ENCODE measurements at regions of chr22 and their contacts with region 1.

Region 1: DNA sequence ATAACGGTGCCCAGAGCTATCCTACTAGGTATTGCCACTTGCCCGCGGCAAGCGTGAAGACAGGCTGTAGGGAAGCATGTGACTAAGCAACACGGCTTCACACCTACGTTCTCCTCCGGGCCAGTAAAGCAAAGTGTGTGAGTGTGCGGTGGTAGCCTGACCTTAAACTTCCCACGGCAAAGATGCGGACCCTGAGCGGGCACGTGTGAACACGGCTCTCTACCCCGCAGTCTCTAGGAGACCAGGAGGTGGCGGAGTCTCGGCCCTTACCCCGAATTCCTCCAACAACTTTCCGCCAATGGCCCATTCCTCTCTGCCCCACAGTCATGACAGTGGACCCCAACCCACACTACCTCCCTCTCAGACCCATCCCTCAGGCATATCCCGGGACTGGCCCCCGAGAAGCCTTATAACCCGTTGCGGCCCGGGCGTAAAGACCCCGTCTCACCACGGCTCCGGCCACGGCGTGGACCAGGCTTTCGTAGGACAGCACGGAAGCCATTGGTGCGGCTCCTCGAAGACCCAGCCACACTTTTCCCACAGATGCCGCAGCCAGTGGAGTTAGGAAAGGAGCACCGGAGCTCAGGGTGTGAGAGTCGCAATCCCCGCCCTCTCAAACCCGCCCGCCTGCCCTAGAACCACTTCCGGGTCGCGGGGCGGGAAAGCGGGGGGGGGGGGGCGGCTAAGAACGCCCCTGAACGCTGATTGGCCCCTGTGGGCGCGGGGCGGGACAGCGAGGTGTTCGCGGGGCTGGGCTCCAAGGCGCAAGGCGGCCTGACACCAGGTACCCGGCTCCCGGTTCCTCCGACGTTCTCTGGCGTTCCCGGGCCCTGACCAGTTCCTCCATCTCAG is at the start of gene SLC25A17:
- DNase-seq: peak; percentile 78
- ATAC-seq: peak; percentile 93
- H3K4me3 Mint-ChIP-seq: peak within 1 kb of the TSS; percentile 98
- H3K27ac Mint-ChIP-seq: peak within 1 kb of the TSS; percentile 92
- H3K4me1 Mint-ChIP-seq: peaks cover 36% of the 10 kb centered on the region
- H3K27me3 Mint-ChIP-seq: no peaks in the 10 kb centered on the region
- CTCF ChIP-seq: no peak
- total RNA-seq, gene SLC25A17: 14.8 and 19.3 TPM in 2 replicates

Region 2: DNA sequence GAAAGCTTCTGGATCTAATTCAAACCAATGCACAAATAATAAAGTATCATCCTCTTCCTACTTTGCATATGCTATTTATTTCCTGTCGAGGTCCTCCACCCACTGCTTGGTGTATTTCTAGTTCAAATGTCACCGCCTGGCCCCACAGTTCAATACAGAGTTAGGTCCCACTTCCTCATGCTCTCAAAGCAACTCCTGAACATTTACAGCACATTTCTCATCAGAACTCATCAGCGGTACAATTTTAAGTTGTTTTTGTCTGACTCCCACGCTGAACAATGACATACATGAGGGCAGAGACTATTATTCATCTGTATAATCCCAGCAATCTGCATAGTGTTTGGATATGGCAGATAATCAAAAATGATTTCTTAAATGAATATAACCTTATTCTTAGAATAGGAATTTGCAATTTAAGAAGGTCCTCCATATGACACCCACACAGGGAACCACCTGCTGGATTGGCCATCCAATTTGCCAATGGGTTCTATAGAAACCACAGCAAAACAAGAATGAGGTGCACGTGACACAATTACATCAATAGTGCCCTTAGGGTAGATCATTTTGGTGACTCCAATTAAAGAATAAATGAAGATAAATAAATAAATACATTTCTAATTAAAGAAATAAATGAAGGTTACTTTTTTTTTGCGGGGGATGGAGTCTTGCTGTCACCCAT is 54.1 kb before region 1 on chr22:
- CTCF ChIA-PET with region 1: no interaction called
- POLR2A ChIA-PET with region 1: no interaction called
- intact Hi-C with region 1: loop called (anchors 2 kb)
- DNase-seq: no peak
- ATAC-seq: peak; percentile 89
- H3K4me3 Mint-ChIP-seq: peak overlapping the region; percentile 69
- H3K27ac Mint-ChIP-seq: peak overlapping the region; percentile 95
- H3K4me1 Mint-ChIP-seq: peaks cover 46% of the 10 kb centered on the region
- H3K27me3 Mint-ChIP-seq: no peaks in the 10 kb centered on the region
- CTCF ChIP-seq: no peak